CD14-positive monocyte (primary cell): ENCODE measurements at regions of chr1 and their contacts with region 1.

Region 1: DNA sequence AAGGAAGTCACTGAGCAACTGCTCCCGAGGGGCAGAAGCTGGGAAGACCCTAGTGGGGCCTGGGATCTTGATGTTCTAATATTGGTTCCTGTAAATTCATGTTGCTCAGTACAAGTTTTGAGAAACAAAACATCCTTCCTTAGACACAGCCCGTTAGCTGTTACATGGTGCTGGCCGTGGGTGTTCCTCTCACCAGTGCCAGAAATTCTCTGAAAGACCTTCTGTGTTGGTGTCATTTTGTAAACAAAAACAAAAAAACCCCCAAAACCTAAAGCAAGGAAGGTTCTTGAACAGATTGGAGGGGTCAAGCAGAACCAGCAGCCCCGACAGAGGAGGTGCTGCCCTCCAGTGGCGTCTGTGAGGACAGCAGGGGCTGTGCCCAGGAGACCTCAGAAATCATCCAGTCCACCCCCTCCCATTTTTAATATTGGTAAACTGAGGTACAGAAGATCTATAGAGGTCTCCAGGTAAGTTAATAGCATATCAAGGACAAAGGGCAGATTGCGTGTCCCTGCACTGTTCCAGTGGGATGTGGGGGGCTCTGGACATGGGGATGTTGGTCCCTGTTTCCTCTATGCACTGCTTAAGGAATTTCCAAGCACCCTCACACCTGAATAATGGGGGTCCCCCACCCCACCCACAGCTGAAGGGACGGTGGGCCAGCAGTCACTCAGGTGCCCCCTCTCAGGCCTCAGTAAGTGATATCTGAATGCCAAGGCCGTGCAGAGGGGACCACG is 38.2 kb downstream of the SLC2A7 start:
- DNase-seq: peak in 2 of 3 donors; percentile 43 to 45
- H3K4me3 ChIP-seq: peak overlapping the region in 1 of 3 experiments; percentile 49
- H3K4me3 Mint-ChIP-seq: peak overlapping the region; percentile 27 to 42
- H3K27ac ChIP-seq: no peak overlapping the region
- H3K27ac Mint-ChIP-seq: peak overlapping the region in 1 of 7 donors; percentile 10
- H3K4me1 ChIP-seq: peaks cover 4 to 5% of the 10 kb centered on the region in 2 donors
- H3K4me1 Mint-ChIP-seq: peaks cover 7% of the 10 kb centered on the region
- H3K27me3 ChIP-seq: no peaks in the 10 kb centered on the region
- H3K27me3 Mint-ChIP-seq: peaks cover 3 to 5% (median 4%) of the 10 kb centered on the region in 3 donors
- CTCF ChIP-seq: peak; percentile 95

Region 2: DNA sequence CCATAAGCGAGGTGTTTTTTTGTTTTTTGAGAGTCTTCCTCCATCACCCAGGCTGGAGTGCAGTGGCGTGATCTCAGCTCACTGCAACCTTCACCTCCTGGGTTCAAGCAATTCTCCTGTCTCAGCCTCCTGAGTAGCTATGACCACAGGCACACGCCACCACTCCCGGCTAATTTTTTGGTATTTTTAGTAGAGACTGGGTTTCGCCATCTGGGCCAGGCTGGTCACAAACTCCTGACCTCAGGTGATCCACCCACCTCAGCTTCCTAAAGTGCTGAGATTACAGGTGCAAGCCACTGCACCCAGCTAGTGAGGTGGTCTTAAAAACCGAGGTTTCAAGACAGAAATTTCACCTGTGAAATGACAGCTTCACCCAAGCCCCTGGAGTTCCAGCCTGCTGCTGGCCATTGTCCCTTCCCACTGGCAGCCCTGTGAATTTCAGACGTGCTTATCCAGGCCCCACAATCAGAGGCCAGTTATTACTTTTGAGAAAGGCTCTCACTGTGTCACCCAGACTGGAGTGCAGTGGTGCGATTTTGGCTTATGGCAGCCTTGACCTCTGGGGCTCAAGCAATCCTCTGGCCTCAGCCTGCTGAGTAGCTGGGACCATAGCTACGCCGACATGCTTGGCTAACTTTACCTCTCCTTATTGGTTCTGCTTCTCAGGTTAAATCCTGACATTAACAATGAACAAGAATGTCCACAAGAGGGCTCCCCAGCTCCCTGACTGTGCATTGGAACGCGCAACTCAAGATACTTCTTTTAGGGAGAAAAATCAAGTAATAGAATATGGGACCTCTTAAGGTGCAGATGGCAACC is 129.0 kb before region 1 on chr1:
- intact Hi-C with region 1: loop called (anchors 5 kb)
- DNase-seq: peak; percentile 59 to 78 (median 64)
- H3K4me3 ChIP-seq: no peak overlapping the region
- H3K4me3 Mint-ChIP-seq: no peak overlapping the region
- H3K27ac ChIP-seq: peak overlapping the region; percentile 21 to 49
- H3K27ac Mint-ChIP-seq: peak overlapping the region; percentile 19 to 86 (median 76)
- H3K4me1 ChIP-seq: peaks cover 5 to 7% of the 10 kb centered on the region in 2 donors
- H3K4me1 Mint-ChIP-seq: peaks cover 20% of the 10 kb centered on the region
- H3K27me3 ChIP-seq: no peaks in the 10 kb centered on the region
- H3K27me3 Mint-ChIP-seq: no peaks in the 10 kb centered on the region
- CTCF ChIP-seq: peak; percentile 78

Region 3: DNA sequence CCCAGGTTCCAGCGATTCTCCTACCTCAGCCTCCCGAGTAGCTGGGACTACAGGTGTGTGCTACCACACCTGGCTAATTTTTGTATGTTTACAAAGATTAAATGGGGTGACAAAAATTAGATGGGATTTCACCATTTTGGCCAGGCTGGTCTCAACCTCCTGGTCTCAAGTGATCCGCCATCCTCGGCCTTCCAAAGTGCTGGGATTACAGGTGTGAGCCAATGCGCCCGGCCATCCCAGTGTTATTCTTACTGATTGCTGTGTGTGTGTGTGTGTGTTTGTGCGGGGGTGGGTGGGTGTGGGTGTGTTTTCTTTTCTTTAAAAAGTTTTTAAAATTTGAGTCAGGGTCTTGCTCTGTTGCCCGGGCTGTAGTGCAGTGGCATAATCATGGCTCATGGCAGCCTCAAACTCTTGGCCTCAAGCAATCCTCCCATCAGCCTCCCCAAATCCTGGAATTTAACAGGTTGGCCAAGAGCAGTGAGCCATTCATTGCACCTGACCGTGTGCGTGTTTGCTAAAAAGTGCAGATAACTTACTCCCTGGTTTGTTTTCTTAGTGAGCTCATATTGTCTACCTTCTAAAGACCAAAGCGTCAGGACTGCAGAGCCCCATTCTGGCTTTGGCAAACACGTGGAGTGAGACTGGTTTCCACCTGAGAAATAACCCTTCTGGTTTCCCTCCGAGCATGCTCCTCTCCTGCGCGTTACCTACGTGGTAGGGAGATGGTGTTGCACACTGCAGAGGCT is 74.8 kb before region 1 on chr1:
- intact Hi-C with region 1: loop called (anchors 2 to 5 kb)
- DNase-seq: no peak
- H3K4me3 ChIP-seq: no peak overlapping the region
- H3K4me3 Mint-ChIP-seq: no peak overlapping the region
- H3K27ac ChIP-seq: no peak overlapping the region
- H3K27ac Mint-ChIP-seq: peak overlapping the region in 1 of 7 donors; percentile 25
- H3K4me1 ChIP-seq: peaks cover 6 to 14% of the 10 kb centered on the region in 2 donors
- H3K4me1 Mint-ChIP-seq: peaks cover 20% of the 10 kb centered on the region
- H3K27me3 ChIP-seq: no peaks in the 10 kb centered on the region
- H3K27me3 Mint-ChIP-seq: peaks cover 0 to 4% (median 2%) of the 10 kb centered on the region in 3 donors
- CTCF ChIP-seq: no peak

Region 4: DNA sequence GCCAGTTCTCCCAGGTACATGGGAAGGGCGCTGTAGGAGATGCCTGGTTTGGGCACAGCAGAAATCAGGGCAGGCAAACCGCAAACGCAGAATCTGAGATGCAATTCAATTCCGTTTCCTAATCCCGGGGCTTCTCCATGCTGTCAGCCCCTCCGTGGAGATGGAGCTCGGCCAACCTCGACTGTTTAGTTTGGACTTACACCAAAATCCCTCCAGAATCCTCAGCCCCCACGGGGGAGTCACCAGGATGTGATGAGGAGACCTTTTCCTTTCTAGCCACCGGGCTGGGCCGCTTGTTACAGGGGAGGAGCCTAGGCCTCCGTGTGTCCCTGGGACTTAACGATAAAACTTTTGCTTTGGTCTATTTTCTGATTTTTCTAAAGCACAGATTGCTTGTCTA is 30.3 kb after region 1 on chr1:
- intact Hi-C with region 1: no loop called
- DNase-seq: no peak
- H3K4me3 ChIP-seq: no peak overlapping the region
- H3K4me3 Mint-ChIP-seq: no peak overlapping the region
- H3K27ac ChIP-seq: no peak overlapping the region
- H3K27ac Mint-ChIP-seq: no peak overlapping the region
- H3K4me1 ChIP-seq: no peaks in the 10 kb centered on the region
- H3K4me1 Mint-ChIP-seq: peaks cover 5% of the 10 kb centered on the region
- H3K27me3 ChIP-seq: peaks cover 0 to 2% of the 10 kb centered on the region in 2 donors
- H3K27me3 Mint-ChIP-seq: peaks cover 4 to 18% (median 8%) of the 10 kb centered on the region in 3 donors
- CTCF ChIP-seq: no peak

Region 5: DNA sequence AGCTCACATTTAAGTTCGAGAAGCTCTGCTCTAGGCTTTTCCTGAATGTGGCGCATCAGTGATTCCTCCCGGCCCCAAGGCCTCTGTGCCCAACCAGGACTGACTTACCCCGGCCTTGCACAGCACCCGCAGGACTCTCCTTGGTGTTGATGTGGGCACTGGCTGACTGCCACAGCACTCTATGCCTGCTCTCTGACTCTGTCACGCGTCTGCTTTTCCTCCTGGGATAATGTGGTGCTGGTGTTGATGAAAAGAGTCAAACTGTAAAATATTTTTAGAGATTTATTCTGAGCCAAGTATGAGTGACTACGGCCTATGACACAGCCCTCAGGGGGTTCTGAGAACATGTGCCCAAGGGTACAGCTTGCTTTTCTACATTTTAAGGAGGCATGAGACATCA is 96.9 kb after region 1 on chr1:
- intact Hi-C with region 1: no loop called
- DNase-seq: no peak
- H3K4me3 ChIP-seq: no peak overlapping the region
- H3K4me3 Mint-ChIP-seq: peak overlapping the region in 1 of 2 donors; percentile 12
- H3K27ac ChIP-seq: peak overlapping the region in 1 of 2 donors; percentile 8
- H3K27ac Mint-ChIP-seq: peak overlapping the region in 5 of 7 donors; percentile 50 to 70 (median 59)
- H3K4me1 ChIP-seq: peaks cover 55 to 59% of the 10 kb centered on the region in 2 donors
- H3K4me1 Mint-ChIP-seq: peaks cover 76% of the 10 kb centered on the region
- H3K27me3 ChIP-seq: no peaks in the 10 kb centered on the region
- H3K27me3 Mint-ChIP-seq: peaks cover 0 to 4% (median 0%) of the 10 kb centered on the region in 3 donors
- CTCF ChIP-seq: no peak